ENCODE measurements at regions of chr19 and their contacts with region 1.

Region 1: GRCh38 chr19:10502524-10503001 is 593 bp downstream of the KEAP1 start:
- DNase-seq: peak; percentile 95 to 97 (median 97)
- ATAC-seq: peak; percentile 93 to 97 (median 95)
- H3K4me3 ChIP-seq: peak overlapping the region; percentile 72 to 99 (median 95)
- H3K27ac ChIP-seq: peak overlapping the region; percentile 96 to 100 (median 99)
- H3K4me1 ChIP-seq: peaks cover 0 to 47% (median 34%) of the 10 kb centered on the region in 12 donors
- H3K27me3 ChIP-seq: no peaks in the 10 kb centered on the region
- CTCF ChIP-seq: peak in 3 of 12 donors; percentile 8 to 25 (median 17)
- POLR2A ChIP-seq: peak in 1 of 2 donors; percentile 60

Region 2: DNA sequence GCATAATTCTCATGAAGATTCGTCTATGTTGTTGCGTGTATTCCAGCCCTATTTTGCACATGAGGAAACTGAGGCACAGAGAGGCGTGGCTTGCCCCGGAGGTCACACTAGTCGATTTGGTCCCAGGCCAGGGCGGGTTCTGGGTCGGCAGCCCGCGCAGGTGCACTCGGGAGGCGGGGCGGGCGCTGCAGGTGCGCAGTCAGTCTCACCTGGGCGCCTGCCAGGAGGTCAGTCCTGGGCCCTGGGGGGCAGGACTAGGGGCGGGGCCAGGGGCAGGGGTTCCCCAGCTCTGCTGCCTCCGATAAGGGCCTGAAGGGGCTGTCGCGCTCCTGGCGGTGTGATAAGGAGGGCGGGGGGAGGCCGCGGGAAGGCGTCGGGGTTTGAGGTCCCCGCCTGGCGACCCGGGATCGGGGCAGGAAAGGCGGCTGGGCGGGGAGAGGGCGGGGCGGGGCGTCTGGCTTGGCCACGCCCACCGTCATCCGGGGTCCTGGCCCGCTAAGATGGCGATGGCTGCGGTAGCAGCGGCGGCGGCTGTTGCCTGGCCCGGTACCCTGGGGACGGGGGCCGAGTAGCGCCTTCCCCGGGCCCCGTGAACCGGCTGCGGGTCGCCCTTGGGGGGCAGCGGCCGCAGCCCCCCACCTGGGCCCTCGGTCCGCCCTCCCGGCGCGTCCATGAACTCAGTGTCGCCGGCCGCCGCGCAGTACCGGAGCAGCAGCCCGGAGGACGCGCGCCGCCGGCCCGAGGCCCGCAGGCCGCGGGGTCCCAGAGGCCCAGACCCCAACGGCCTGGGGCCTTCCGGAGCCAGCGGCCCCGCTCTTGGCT is 41.1 kb after region 1 on chr19 and contains the start of gene ATG4D:
- intact Hi-C with region 1: loop called in 4 of 10 experiments (anchors 2 to 5 kb)
- DNase-seq: peak; percentile 75 to 91 (median 84)
- ATAC-seq: peak; percentile 52 to 91 (median 88)
- H3K4me3 ChIP-seq: peak within 1 kb of the TSS; percentile 71 to 100 (median 95)
- H3K27ac ChIP-seq: peak within 1 kb of the TSS; percentile 76 to 99 (median 92)
- H3K4me1 ChIP-seq: peaks cover 0 to 29% (median 17%) of the 10 kb centered on the region in 12 donors
- H3K27me3 ChIP-seq: no peaks in the 10 kb centered on the region
- CTCF ChIP-seq: no peak
- POLR2A ChIP-seq: peak in 1 of 2 donors; percentile 78
- total RNA-seq, gene ATG4D: 47.3 to 76.1 (median 55.3) TPM

Measured in heart left ventricle (tissue), 16 donors.